Heart right ventricle (tissue), 16 donors: ENCODE measurements at regions of chr19 and their contacts with region 1.

Region 1: GRCh38 chr19:40231544-40232424 is 5.3 kb upstream of the CCNP start:
- DNase-seq: peak in 1 of 2 donors; percentile 35
- ATAC-seq: peak; percentile 35 to 79 (median 72)
- H3K4me3 ChIP-seq: no peak overlapping the region
- H3K27ac ChIP-seq: peak overlapping the region in 6 of 10 donors; percentile 25 to 65 (median 44)
- H3K4me1 ChIP-seq: peaks cover 7 to 27% (median 16%) of the 10 kb centered on the region in 9 donors
- H3K27me3 ChIP-seq: peaks cover 0 to 13% (median under 1%) of the 10 kb centered on the region in 7 donors
- CTCF ChIP-seq: no peak

Region 2: GRCh38 chr19:40285353-40286234 is 53.8 kb after region 1 on chr19:
- intact Hi-C with region 1: loop called in 1 of 10 experiments (anchors 5 kb)
- DNase-seq: peak; percentile 98 to 99
- ATAC-seq: peak; percentile 94 to 98 (median 97)
- H3K4me3 ChIP-seq: peak overlapping the region; percentile 83 to 99 (median 96)
- H3K27ac ChIP-seq: peak overlapping the region; percentile 92 to 100 (median 97)
- H3K4me1 ChIP-seq: peaks cover 18 to 51% (median 45%) of the 10 kb centered on the region in 9 donors
- H3K27me3 ChIP-seq: no peaks in the 10 kb centered on the region
- CTCF ChIP-seq: no peak